HCT116 (cell line): ENCODE measurements at regions of chr6 and their contacts with region 1.

Region 1: GRCh38 chr6:31862344-31863227 is at the start of gene NEU1:
- DNase-seq: peak; percentile 100
- ATAC-seq: peak; percentile 96
- H3K4me3 ChIP-seq: peak within 1 kb of the TSS; percentile 78 to 79
- H3K27ac ChIP-seq: peak within 1 kb of the TSS; percentile 41
- H3K4me1 ChIP-seq: peaks cover 0 to 31% of the 10 kb centered on the region in 2 experiments; a peak in 3 of 4 replicates
- H3K27me3 ChIP-seq: no peaks in the 10 kb centered on the region
- CTCF ChIP-seq: no peak
- POLR2A ChIP-seq: peak; percentile 83
- RAD21 ChIP-seq: no peak
- total RNA-seq, gene NEU1: 15.1 TPM

Region 2: GRCh38 chr6:31559958-31560696 is 302.5 kb before region 1 on chr6:
- CTCF ChIA-PET with region 1: no interaction called
- POLR2A ChIA-PET with region 1: no interaction called
- RAD21 ChIA-PET with region 1: no interaction called
- intact Hi-C with region 1: no loop called
- DNase-seq: no peak
- ATAC-seq: peak; percentile 72
- H3K4me3 ChIP-seq: peak overlapping the region in 1 of 2 experiments; percentile 24; a peak in 1 of 4 replicates
- H3K27ac ChIP-seq: no peak overlapping the region
- H3K4me1 ChIP-seq: peaks cover 5 to 24% of the 10 kb centered on the region in 2 experiments; a peak in 3 of 4 replicates
- H3K27me3 ChIP-seq: no peaks in the 10 kb centered on the region
- CTCF ChIP-seq: no peak
- POLR2A ChIP-seq: no peak
- RAD21 ChIP-seq: no peak

Region 3: DNA sequence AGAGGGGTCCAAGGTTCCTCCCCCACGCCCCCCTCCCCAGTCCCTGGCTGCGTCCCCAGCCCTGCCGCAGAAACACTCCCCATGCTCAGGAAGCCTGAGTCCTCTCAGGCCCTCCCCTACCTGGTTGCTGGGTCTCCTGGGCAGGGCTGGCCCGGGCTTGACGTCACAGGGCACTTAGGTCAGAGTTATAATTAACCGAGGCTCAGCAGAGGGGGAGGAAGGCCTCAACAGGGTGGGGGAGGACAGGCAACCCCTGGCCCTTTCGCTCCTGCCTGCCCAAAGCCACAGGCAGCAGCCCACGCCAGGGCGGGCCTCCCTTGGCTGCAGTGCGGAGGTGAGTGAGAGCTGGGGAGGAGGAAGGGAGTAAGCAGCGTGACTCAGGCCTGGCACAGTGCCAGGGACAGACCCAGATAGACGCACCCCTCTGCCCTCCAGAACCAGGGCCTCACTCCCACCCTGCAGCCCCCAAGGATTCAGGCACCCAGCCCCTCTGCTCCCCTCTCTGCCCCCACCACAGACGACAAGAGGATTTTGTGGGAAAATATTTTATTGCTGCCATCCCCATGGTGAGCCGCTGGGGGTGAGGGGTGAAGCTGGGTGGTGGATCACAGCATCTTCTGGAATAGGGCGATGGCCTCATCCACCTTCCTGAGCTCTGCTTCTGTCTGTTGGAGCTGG is 85.5 kb before region 1 on chr6 and contains the start of gene VWA7:
- CTCF ChIA-PET with region 1: interaction called, 3 read pairs
- POLR2A ChIA-PET with region 1: interaction called, 4 read pairs
- RAD21 ChIA-PET with region 1: interaction called in 1 of 2 experiments, 4 read pairs
- intact Hi-C with region 1: loop called (anchors 1 kb)
- DNase-seq: peak; percentile 84
- ATAC-seq: peak; percentile 79
- H3K4me3 ChIP-seq: peak within 1 kb of the TSS; percentile 40 to 56
- H3K27ac ChIP-seq: peak within 1 kb of the TSS; percentile 79
- H3K4me1 ChIP-seq: peaks cover 41 to 56% of the 10 kb centered on the region in 2 experiments
- H3K27me3 ChIP-seq: no peaks in the 10 kb centered on the region
- CTCF ChIP-seq: no peak
- POLR2A ChIP-seq: no peak
- RAD21 ChIP-seq: no peak
- total RNA-seq, gene VWA7: 14.6 TPM

Region 4: DNA sequence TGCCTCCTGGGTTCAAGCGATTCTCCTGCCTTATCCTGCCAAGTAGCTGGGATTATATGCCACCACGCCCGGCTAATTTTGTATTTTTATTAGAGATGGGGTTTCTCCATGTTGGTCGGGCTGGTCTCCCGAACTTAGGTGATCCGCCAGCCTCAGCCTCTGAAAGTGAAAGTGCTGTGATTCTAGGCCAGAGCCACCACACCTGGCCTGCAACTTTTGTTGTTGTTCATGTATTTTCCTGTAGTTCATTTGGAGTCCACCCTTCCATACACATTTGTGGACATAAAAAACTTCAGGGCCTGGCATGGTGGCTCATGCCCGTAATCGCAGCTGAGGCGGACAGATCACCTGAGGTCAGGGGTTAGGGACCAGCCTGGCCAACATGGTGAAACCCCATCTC is 20.5 kb before region 1 on chr6:
- CTCF ChIA-PET with region 1: no interaction called
- POLR2A ChIA-PET with region 1: interaction called, 13 read pairs
- RAD21 ChIA-PET with region 1: no interaction called
- intact Hi-C with region 1: no loop called
- DNase-seq: no peak
- ATAC-seq: peak; percentile 4
- H3K4me3 ChIP-seq: no peak overlapping the region
- H3K27ac ChIP-seq: peak overlapping the region; percentile 25; the same call in 1 of the 2 replicates
- H3K4me1 ChIP-seq: peaks cover 5 to 24% of the 10 kb centered on the region in 2 experiments; a peak in 3 of 4 replicates
- H3K27me3 ChIP-seq: no peaks in the 10 kb centered on the region
- CTCF ChIP-seq: no peak
- POLR2A ChIP-seq: no peak
- RAD21 ChIP-seq: no peak

Region 5: DNA sequence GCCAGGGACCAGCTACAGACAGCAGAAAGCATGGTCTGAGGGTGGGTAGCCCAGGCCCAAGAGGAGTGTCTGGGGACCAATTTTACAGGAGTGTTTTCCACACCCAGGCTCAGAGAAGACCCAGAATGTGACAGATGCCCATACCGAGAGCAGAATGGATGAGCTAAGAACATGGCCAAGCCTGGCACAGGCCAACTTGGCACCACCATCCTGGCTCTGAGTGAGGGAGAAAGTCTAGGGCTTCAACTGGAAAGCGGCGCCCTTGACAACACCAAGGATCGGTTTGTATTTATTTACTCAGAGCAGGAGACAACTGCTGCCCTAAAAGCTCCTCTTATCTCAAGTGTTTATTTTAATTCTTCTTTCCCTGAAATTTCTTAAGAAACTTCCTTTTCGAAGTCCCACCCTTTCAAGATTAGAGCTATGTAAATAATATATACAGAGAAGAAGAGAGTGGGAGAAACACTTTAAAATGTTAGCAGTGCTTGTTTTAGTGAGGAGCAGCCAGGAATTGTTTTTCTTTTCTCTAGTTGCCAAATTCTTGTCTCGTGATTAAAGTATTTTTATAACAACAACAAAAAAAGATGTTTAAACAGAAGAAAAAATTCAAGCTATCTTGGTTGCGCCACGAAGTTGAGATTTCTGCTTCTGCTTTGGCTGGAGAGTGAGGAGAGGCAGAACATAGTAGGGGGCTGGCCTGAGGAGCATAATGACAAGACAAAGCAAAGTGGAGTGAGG is 230.3 kb after region 1 on chr6:
- CTCF ChIA-PET with region 1: no interaction called
- POLR2A ChIA-PET with region 1: no interaction called
- RAD21 ChIA-PET with region 1: no interaction called
- intact Hi-C with region 1: no loop called
- DNase-seq: no peak
- ATAC-seq: no peak
- H3K4me3 ChIP-seq: no peak overlapping the region
- H3K27ac ChIP-seq: no peak overlapping the region
- H3K4me1 ChIP-seq: peaks cover 3 to 5% of the 10 kb centered on the region in 2 experiments; a peak in 3 of 4 replicates
- H3K27me3 ChIP-seq: no peaks in the 10 kb centered on the region
- CTCF ChIP-seq: no peak
- POLR2A ChIP-seq: no peak
- RAD21 ChIP-seq: no peak